Activated CD8-positive, alpha-beta T cell treated with anti-CD3 and anti-CD28 coated beads, Interleukin-2, amount 10 ng/mL, durations not matched to agents 7 days and 5 days (primary cell): ENCODE measurements at regions of chr12 and their contacts with region 1.

Region 1: GRCh38 chr12:46268590-46269558 is at the start of gene SLC38A1:
- DNase-seq: peak; percentile 93
- ATAC-seq: peak; percentile 73
- H3K4me3 Mint-ChIP-seq: no peak within 1 kb of the TSS
- H3K27ac Mint-ChIP-seq: no peak within 1 kb of the TSS
- H3K4me1 Mint-ChIP-seq: peaks cover 31% of the 10 kb centered on the region
- H3K27me3 Mint-ChIP-seq: no peaks in the 10 kb centered on the region
- total RNA-seq, gene SLC38A1: 162 to 168 TPM

Region 2: DNA sequence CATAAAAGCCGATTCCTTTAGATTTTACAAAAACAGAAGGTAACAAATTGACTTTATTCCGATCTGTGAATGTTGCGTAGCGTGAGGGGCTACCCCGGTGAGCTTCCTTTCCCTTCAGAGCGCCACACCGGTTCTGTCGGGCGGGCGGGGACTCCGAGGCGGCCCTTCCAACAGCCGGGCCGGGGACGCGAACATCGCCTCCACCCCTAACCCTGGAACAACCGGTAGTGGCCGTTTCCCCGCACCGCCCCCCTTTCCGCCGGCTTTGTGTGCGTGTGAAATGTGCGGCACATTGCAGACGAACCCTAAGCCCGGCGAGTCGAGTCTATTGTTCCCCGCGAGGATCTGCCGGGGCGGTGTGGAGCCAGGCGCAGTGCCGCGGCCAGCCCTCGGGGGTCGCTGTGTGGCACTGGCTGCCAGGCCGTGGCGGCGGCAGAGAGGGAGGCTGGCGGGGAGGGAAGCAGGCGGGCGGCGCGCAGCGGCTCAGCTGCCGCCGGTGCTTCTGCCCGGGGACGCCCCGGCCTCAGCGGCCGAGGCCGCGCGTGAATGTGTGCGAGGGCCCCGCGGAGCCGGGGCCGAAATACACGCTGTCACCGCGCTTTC is 540.1 kb before region 1 on chr12:
- CTCF ChIA-PET with region 1: no interaction called
- POLR2A ChIA-PET with region 1: interaction called, 15 read pairs
- DNase-seq: peak; percentile 98
- ATAC-seq: peak; percentile 69
- H3K4me3 Mint-ChIP-seq: peak overlapping the region; percentile 100
- H3K27ac Mint-ChIP-seq: peak overlapping the region; percentile 99
- H3K4me1 Mint-ChIP-seq: peaks cover 20% of the 10 kb centered on the region
- H3K27me3 Mint-ChIP-seq: no peaks in the 10 kb centered on the region

Region 3: GRCh38 chr12:46201418-46201817 is 67.5 kb before region 1 on chr12:
- CTCF ChIA-PET with region 1: interaction called, 3 read pairs
- POLR2A ChIA-PET with region 1: interaction called, 13 read pairs
- DNase-seq: no peak
- ATAC-seq: no peak
- H3K4me3 Mint-ChIP-seq: no peak overlapping the region
- H3K27ac Mint-ChIP-seq: no peak overlapping the region
- H3K4me1 Mint-ChIP-seq: peaks cover 14% of the 10 kb centered on the region
- H3K27me3 Mint-ChIP-seq: no peaks in the 10 kb centered on the region

Region 4: DNA sequence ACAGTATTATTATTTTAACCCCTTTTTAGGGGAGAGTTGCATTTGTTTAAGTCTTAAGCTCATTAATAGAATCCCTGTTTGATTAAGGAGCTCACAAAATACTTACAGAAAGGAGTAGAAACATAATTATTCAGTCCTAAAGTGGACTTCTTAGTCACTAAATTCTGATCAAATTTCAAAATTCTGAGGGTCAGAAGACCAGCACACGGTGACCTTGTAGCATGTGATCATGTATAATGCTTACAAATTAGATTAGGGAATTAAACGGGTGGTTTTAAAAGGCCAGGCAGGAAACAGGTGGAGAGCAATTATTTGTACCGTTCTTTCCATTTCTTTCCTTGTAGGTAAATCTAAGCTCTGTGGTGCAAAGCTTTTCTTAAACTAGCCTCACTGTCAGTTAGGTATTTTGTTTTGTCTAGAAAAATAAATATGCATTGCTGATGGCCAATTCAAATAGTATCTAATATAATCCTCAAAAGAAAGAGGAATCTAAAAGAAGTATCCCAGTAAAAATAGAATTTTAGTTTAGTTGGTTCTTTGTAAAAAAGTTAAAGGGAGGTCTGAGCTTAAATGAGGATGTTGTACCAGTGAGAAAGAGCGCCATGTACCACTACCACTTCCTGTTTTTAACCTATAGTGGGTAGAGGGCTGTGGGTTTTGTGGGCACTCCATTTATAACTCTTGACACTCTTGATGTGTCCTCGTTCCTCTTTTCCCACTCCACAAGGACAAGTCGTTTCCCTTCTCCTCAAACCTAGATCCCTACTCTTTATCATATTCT is 51.1 kb before region 1 on chr12:
- CTCF ChIA-PET with region 1: interaction called, 31 read pairs
- POLR2A ChIA-PET with region 1: interaction called, 345 read pairs
- DNase-seq: peak; percentile 82
- ATAC-seq: peak; percentile 8
- H3K4me3 Mint-ChIP-seq: peak overlapping the region; percentile 61
- H3K27ac Mint-ChIP-seq: peak overlapping the region; percentile 84
- H3K4me1 Mint-ChIP-seq: peaks cover 95% of the 10 kb centered on the region
- H3K27me3 Mint-ChIP-seq: no peaks in the 10 kb centered on the region

Region 5: GRCh38 chr12:46303039-46303666 is 34.3 kb after region 1 on chr12:
- CTCF ChIA-PET with region 1: interaction called, 22 read pairs
- POLR2A ChIA-PET with region 1: interaction called, 4 read pairs
- DNase-seq: peak; percentile 56
- ATAC-seq: peak; percentile 57
- H3K4me3 Mint-ChIP-seq: no peak overlapping the region
- H3K27ac Mint-ChIP-seq: no peak overlapping the region
- H3K4me1 Mint-ChIP-seq: no peaks in the 10 kb centered on the region
- H3K27me3 Mint-ChIP-seq: peaks cover 5% of the 10 kb centered on the region

Region 6: DNA sequence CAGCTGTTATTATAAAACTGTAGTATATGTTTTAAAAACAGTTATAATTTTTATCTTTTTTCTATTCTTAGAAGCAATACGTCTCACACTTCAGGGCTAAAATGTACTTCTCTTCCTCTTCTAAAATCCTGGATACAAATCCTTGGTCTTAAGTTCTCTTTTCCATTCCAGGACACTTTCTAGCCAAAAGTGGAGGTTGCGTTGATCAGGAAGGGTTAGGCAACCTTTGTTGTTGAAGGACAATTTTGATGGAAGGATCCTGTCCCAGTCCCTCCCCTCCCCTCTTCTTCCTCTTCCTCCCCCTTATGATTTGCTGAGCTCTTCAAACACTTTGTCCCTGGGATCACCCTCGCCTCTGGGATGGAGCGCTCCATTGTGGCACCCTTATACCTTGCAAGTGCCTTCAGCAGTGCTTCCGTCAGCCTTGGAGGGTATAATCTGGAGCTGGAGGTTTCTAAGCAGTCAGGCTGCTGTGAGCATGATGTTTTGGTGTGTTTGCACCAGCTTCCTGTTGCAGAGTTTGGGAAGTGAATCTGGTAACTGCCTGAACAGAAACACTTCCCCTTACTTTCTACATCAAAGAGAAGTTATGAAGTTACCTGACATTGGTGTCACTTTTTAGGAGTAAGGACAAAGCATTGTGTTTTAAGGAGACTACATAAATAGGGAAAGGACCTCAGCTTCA is 191.1 kb after region 1 on chr12:
- CTCF ChIA-PET with region 1: no interaction called
- POLR2A ChIA-PET with region 1: interaction called, 13 read pairs
- DNase-seq: peak; percentile 40
- ATAC-seq: peak; percentile 45
- H3K4me3 Mint-ChIP-seq: peak overlapping the region; percentile 53
- H3K27ac Mint-ChIP-seq: peak overlapping the region; percentile 92
- H3K4me1 Mint-ChIP-seq: peaks cover 62% of the 10 kb centered on the region
- H3K27me3 Mint-ChIP-seq: no peaks in the 10 kb centered on the region